ENCODE measurements at regions of chr3 and their contacts with region 1.

Region 1: DNA sequence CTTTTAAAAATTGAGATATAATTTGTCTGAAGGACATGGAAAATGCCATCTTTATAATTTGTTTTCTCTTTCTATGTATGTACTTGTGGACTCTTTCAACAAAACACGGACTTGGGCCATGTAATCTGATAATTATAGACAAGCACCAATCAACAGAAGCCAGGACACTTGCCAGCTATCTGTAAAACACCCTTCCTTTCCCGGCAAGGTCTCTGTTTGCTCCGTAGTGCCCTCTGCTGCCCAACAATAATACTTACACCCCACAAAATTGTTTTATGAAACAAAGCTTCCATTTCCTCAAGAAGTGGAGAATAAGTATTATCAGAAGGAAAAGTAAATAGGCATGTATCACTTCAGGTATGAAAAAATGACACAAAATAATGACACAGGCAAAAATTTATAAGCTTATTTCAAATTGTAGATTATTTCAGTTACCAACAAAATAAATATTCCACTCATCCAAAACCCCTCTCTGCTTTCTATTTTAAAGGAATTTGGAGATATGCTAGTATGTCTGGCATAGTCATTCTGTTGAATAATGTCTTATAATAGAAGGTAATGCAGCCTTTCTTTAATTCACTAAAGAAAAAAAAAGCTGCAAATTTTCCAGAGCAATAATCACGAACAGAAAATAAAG is 32.8 kb downstream of the MYH15 start:
- DNase-seq: no peak
- H3K4me3 ChIP-seq: no peak overlapping the region
- H3K27me3 ChIP-seq: no peaks in the 10 kb centered on the region
- CTCF ChIP-seq: peak; percentile 71

Region 2: DNA sequence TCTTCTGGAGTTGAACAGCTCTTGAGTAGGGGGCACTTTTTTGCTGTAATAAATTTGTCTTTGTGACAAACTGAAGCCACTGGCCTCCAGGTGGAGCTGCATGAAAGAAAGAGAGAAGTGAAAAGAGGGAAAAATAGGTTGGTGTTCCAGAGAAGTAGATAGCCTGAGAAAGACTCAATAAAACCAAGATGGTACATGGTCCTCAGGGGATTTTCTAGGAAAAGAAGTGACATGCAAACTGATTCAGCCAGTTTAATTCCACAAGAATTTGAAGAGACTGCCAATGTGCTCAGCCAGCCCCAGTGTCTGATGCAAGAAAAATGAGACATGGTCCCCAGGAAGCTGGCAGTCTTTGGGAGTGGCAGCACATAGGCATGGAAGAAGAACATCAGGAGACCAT is 539.5 kb before region 1 on chr3:
- CTCF ChIA-PET with region 1: interaction called, 11 read pairs
- POLR2A ChIA-PET with region 1: no interaction called
- DNase-seq: no peak
- H3K4me3 ChIP-seq: no peak overlapping the region
- H3K27me3 ChIP-seq: peaks cover 6% of the 10 kb centered on the region
- CTCF ChIP-seq: peak; percentile 63

Region 3: GRCh38 chr3:108153451-108153981 is 324.1 kb before region 1 on chr3:
- CTCF ChIA-PET with region 1: interaction called, 18 read pairs
- POLR2A ChIA-PET with region 1: no interaction called
- DNase-seq: no peak
- H3K4me3 ChIP-seq: no peak overlapping the region
- H3K27me3 ChIP-seq: no peaks in the 10 kb centered on the region
- CTCF ChIP-seq: peak; percentile 46

Region 4: DNA sequence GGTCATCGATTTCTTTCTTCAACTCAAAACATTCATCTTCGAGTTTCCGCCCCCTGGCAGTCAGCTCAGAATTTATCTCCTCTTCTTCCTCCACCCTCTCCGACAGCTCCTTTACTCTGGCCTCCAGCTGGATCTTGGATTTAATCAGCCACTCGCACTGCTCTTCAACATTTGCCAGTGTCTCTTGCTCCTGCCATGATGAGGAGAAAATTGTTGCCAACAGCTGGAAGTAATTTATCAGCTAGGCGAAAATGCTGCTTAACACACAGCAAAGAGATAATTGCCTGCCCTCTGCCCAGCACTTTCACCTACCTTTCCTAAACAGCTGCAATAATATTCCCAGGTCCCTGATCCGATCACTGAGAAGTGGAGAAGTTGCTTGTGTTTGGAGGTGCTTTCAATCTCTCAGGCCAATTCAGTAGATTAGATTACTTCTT is 36.5 kb before region 1 on chr3:
- CTCF ChIA-PET with region 1: interaction called, 10 read pairs
- POLR2A ChIA-PET with region 1: no interaction called
- DNase-seq: no peak
- H3K4me3 ChIP-seq: no peak overlapping the region
- H3K27me3 ChIP-seq: no peaks in the 10 kb centered on the region
- CTCF ChIP-seq: no peak

Measured in BJ (cell line).